GM12878 (cell line): ENCODE measurements at regions of chr6 and their contacts with region 1.

Region 1: GRCh38 chr6:41367700-41368099 is 32.3 kb downstream of the NCR2 start:
- DNase-seq: no peak
- ATAC-seq: peak; percentile 76
- H3K4me3 ChIP-seq: no peak overlapping the region
- H3K27ac ChIP-seq: no peak overlapping the region
- H3K4me1 ChIP-seq: no peaks in the 10 kb centered on the region
- H3K27me3 ChIP-seq: peaks cover 6 to 9% of the 10 kb centered on the region in 2 experiments; a peak in 3 of 4 replicates
- CTCF ChIP-seq: peak; percentile 46 to 68 (median 50); a peak in 4 of 6 replicates
- EP300 ChIP-seq: no peak
- POLR2A ChIP-seq: no peak
- RAD21 ChIP-seq: peak; percentile 65

Region 2: DNA sequence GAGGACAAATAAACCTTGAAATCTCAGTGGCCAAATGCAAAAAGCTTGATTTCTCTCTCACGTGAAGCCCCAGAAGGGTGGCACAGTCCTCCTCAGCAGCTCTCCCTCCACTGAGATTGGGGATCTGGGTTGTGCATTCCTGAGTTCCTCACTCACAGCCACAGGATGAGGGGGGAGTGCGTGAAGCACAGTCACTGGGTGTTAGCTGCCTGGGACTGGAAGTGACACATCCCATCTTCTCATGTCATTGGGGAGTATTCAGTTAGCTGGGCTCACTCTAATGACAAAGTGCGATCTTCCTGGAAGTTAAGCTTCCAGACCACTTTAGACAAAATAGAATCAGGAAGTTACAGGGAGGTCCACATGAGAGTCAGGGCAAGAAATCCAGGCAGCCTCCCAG is 588.3 kb before region 1 on chr6:
- CTCF ChIA-PET with region 1: no interaction called
- POLR2A ChIA-PET with region 1: no interaction called
- RAD21 ChIA-PET with region 1: no interaction called
- SMC1A ChIA-PET with region 1: no interaction called
- in situ Hi-C with region 1: no loop called
- intact Hi-C with region 1: no loop called
- DNase-seq: no peak
- ATAC-seq: no peak
- H3K4me3 ChIP-seq: no peak overlapping the region
- H3K27ac ChIP-seq: no peak overlapping the region
- H3K4me1 ChIP-seq: no peaks in the 10 kb centered on the region
- H3K27me3 ChIP-seq: 0 out of 4 replicates have a peak, but pooled peaks cover 1 to 4% of the 10 kb centered on the region in 2 experiments
- CTCF ChIP-seq: no peak
- EP300 ChIP-seq: no peak
- POLR2A ChIP-seq: no peak
- RAD21 ChIP-seq: no peak

Region 3: GRCh38 chr6:41298785-41299502 is 68.8 kb before region 1 on chr6:
- CTCF ChIA-PET with region 1: interaction called, 15 read pairs
- POLR2A ChIA-PET with region 1: no interaction called
- RAD21 ChIA-PET with region 1: interaction called, 7 read pairs
- SMC1A ChIA-PET with region 1: interaction called, 12 read pairs
- in situ Hi-C with region 1: no loop called
- intact Hi-C with region 1: no loop called
- DNase-seq: no peak
- ATAC-seq: peak; percentile 42; the same call in 2 of the 3 replicates
- H3K4me3 ChIP-seq: no peak overlapping the region
- H3K27ac ChIP-seq: no peak overlapping the region
- H3K4me1 ChIP-seq: peaks cover 7% of the 10 kb centered on the region
- H3K27me3 ChIP-seq: no peaks in the 10 kb centered on the region
- CTCF ChIP-seq: no peak
- EP300 ChIP-seq: no peak
- POLR2A ChIP-seq: no peak
- RAD21 ChIP-seq: no peak

Region 4: GRCh38 chr6:41334482-41335040 is 33.1 kb before region 1 on chr6:
- CTCF ChIA-PET with region 1: interaction called, 69 read pairs
- POLR2A ChIA-PET with region 1: interaction called, 3 read pairs
- RAD21 ChIA-PET with region 1: interaction called, 28 read pairs
- SMC1A ChIA-PET with region 1: interaction called, 26 read pairs
- in situ Hi-C with region 1: no loop called
- intact Hi-C with region 1: no loop called
- DNase-seq: no peak
- ATAC-seq: peak; percentile 47
- H3K4me3 ChIP-seq: no peak overlapping the region
- H3K27ac ChIP-seq: peak overlapping the region; percentile 72
- H3K4me1 ChIP-seq: peaks cover 34% of the 10 kb centered on the region
- H3K27me3 ChIP-seq: no peaks in the 10 kb centered on the region
- CTCF ChIP-seq: peak; percentile 13 to 32 (median 16); a peak in 4 of 6 replicates
- EP300 ChIP-seq: no peak
- POLR2A ChIP-seq: no peak
- RAD21 ChIP-seq: peak; percentile 30; the same call in 1 of the 2 replicates

Region 5: GRCh38 chr6:41449399-41450245 is 81.9 kb after region 1 on chr6:
- CTCF ChIA-PET with region 1: interaction called, 24 read pairs
- POLR2A ChIA-PET with region 1: no interaction called
- RAD21 ChIA-PET with region 1: no interaction called
- SMC1A ChIA-PET with region 1: interaction called, 3 read pairs
- in situ Hi-C with region 1: no loop called
- intact Hi-C with region 1: no loop called
- DNase-seq: no peak
- ATAC-seq: peak; percentile 25; the same call in 2 of the 3 replicates
- H3K4me3 ChIP-seq: no peak overlapping the region
- H3K27ac ChIP-seq: no peak overlapping the region
- H3K4me1 ChIP-seq: no peaks in the 10 kb centered on the region
- H3K27me3 ChIP-seq: 0 out of 4 replicates have a peak, but pooled peaks cover 0 to 1% of the 10 kb centered on the region in 2 experiments
- CTCF ChIP-seq: no peak
- EP300 ChIP-seq: no peak
- POLR2A ChIP-seq: no peak
- RAD21 ChIP-seq: no peak

Region 6: DNA sequence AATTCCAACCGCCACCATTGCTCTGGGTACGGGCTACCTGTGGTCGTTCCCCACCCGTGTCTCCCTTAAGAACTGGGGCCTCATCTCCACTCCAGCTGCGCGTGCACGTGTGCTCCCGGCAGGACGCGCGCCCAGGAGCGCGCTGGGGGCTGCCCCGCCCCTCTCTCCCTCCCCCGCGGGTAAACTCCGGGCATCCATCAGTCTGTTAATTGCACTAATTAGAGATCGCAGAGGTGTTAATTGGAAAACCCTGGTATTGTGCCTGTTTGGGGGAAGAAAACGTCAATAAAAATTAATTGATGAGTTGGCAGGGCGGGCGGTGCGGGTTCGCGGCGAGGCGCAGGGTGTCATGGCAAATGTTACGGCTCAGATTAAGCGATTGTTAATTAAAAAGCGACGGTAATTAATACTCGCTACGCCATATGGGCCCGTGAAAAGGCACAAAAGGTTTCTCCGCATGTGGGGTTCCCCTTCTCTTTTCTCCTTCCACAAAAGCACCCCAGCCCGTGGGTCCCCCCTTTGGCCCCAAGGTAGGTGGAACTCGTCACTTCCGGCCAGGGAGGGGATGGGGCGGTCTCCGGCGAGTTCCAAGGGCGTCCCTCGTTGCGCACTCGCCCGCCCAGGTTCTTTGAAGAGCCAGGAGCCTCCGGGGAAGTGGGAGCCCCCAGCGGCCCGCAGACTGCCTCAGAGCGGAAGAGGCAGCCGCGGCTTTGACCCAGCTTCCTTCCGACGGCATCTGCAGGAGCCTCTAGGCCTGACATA is 192.9 kb after region 1 on chr6:
- CTCF ChIA-PET with region 1: no interaction called
- POLR2A ChIA-PET with region 1: no interaction called
- RAD21 ChIA-PET with region 1: no interaction called
- SMC1A ChIA-PET with region 1: no interaction called
- in situ Hi-C with region 1: no loop called
- intact Hi-C with region 1: no loop called
- DNase-seq: no peak
- ATAC-seq: peak; percentile 92
- H3K4me3 ChIP-seq: peak overlapping the region; percentile 53
- H3K27ac ChIP-seq: peak overlapping the region; percentile 42; the same call in 1 of the 2 replicates
- H3K4me1 ChIP-seq: peaks cover 5% of the 10 kb centered on the region; the same call in 1 of the 2 replicates
- H3K27me3 ChIP-seq: no peaks in the 10 kb centered on the region
- CTCF ChIP-seq: 0 out of 6 replicates have a peak, but pooled peaks of 1 of the 3 experiments have one; percentile 3
- EP300 ChIP-seq: no peak
- POLR2A ChIP-seq: peak; percentile 60
- RAD21 ChIP-seq: 0 out of 2 replicates have a peak, but pooled peaks have one; percentile 4

Region 7: DNA sequence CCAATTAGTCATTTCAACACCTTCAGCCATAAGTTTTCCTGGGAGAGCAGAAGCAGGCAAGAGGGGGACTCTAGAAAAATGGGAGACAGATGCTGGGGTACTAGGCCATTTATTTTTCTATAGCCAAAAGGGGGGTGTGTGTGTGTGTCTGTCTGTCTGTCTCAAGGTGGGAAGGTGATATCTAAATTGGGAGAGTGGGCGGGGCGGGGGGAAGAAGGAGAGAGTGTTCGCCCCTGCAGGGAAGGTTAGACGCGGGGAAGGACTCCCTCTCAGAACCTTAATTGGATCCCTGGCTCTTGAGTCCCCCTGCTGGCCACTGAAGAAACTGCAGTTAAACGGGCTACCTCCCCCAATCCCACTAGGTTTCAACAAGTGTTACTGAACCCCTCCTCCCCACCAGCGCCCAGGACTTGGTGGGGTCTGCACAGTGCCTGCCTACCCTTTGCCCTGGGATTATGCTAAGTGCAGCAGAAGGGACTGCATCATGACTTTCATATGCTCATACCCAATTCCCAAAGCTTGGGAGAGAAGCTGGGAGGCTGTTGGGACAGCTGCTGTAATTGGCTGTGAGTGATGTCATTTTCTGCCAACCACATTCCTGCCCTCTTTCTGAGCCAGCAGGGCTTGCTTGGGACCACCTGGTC is 224.3 kb after region 1 on chr6:
- CTCF ChIA-PET with region 1: interaction called, 4 read pairs
- POLR2A ChIA-PET with region 1: no interaction called
- RAD21 ChIA-PET with region 1: interaction called, 5 read pairs
- SMC1A ChIA-PET with region 1: interaction called, 4 read pairs
- in situ Hi-C with region 1: loop called (anchors 5 kb)
- intact Hi-C with region 1: loop called (anchors 1 kb)
- DNase-seq: peak; percentile 9
- ATAC-seq: peak; percentile 92
- H3K4me3 ChIP-seq: no peak overlapping the region
- H3K27ac ChIP-seq: no peak overlapping the region
- H3K4me1 ChIP-seq: no peaks in the 10 kb centered on the region
- H3K27me3 ChIP-seq: no peaks in the 10 kb centered on the region
- CTCF ChIP-seq: peak; percentile 86 to 96 (median 94); a peak in 5 of 6 replicates
- EP300 ChIP-seq: no peak
- POLR2A ChIP-seq: 0 out of 2 replicates have a peak, but pooled peaks have one; percentile 11
- RAD21 ChIP-seq: peak; percentile 96

Region 8: GRCh38 chr6:41779793-41780545 is 412.3 kb after region 1 on chr6 and contains the start of gene FRS3:
- CTCF ChIA-PET with region 1: interaction called, 12 read pairs
- POLR2A ChIA-PET with region 1: no interaction called
- RAD21 ChIA-PET with region 1: no interaction called
- SMC1A ChIA-PET with region 1: no interaction called
- in situ Hi-C with region 1: no loop called
- intact Hi-C with region 1: loop called (anchors 5 kb)
- DNase-seq: peak; percentile 78
- ATAC-seq: peak; percentile 95
- H3K4me3 ChIP-seq: peak within 1 kb of the TSS; percentile 74
- H3K27ac ChIP-seq: no peak within 1 kb of the TSS
- H3K4me1 ChIP-seq: peaks cover 18% of the 10 kb centered on the region
- H3K27me3 ChIP-seq: no peaks in the 10 kb centered on the region
- CTCF ChIP-seq: peak; percentile 94 to 99 (median 97); a peak in 5 of 6 replicates
- EP300 ChIP-seq: 0 out of 4 replicates have a peak, but pooled peaks of 1 of the 2 experiments have one; percentile 30
- POLR2A ChIP-seq: no peak
- RAD21 ChIP-seq: peak; percentile 97
- polyA plus RNA-seq, gene FRS3: 0.05 to 0.09 TPM

Region 9: DNA sequence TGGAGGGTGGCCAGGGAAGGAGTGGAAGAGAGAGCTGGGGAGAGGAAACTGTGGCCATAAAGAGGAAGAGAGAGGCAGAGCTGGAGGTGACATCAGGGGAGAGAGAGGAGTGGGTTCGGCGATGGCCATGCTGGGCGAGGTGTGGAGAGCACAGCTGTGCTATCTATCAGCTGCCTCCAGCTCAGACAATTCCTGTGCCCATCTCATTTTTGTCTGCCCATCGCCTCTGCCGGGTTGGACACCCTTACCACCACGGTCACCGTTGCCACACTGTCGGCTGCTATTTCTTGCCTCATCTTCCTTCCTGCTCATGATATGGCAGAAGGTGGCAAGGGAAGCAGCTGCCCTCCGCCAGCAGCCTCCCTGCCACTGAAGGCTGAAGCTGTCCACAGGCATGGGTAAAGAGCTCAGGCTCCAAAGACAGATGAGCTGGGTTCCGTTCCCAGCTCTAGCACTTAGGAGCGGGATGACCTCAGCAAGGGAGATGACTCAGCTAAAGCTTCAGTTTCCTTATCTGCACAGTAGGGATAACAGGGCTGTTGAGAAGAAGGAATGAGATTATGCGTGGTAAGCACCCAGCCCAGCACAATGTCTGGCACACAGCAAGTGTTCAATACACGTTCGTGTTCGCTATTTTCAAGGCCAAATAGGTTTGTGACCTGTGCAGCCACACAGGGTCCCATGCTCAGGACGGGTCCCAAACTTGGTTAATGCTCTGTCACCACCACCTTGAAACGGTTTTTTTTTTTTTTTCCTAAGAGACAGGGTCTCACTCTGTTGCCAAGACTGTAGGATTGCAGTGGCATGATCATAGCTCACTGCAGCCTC is 660.7 kb after region 1 on chr6:
- CTCF ChIA-PET with region 1: no interaction called
- POLR2A ChIA-PET with region 1: no interaction called
- RAD21 ChIA-PET with region 1: no interaction called
- SMC1A ChIA-PET with region 1: no interaction called
- in situ Hi-C with region 1: no loop called
- intact Hi-C with region 1: no loop called
- DNase-seq: no peak
- ATAC-seq: no peak
- H3K4me3 ChIP-seq: no peak overlapping the region
- H3K27ac ChIP-seq: peak overlapping the region; percentile 13; the same call in 1 of the 2 replicates
- H3K4me1 ChIP-seq: peaks cover 50% of the 10 kb centered on the region
- H3K27me3 ChIP-seq: no peaks in the 10 kb centered on the region
- CTCF ChIP-seq: no peak
- EP300 ChIP-seq: no peak
- POLR2A ChIP-seq: no peak
- RAD21 ChIP-seq: no peak